ENCODE measurements at regions of chr2 and their contacts with region 1.

Region 1: DNA sequence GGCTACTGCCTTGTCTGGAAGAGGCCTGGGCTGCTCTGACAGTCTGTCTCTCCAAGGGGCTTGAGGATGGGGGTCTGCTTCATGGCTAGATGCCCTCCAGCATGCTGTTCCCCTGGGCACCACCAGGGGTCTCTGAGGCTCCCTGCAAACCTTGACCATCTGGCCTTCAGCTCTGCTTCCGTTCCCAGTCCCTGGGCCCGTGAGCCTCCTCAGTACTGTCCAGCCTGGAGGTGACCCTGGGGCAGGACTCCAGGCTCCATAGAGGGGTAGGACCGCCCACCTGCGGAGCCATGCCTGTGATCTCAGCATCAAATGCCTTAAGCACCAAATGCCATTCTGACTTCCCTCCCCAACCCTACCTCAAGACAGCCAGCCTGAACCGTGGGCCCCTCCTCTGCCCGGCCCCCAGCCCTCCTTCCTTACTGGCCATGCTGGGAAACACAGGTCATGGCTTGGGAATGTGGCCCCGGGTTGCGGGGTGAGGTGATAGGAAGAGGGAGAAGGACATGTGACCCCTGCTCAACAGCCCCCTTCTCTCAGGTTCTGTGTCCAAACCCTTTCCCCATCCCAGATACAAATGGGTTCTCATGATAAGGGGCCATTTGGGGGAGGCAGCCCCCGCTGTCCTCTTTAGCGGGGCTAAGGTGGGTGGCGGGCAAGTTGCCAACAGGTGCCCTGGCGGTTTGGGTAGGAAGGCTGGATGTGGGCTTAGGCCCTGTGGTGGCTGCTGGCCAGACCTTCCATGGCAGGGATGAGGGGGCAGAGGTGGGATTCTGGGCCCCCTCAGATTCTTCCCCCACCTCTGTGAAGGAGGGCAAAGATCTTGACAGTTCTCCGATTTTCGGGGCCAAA is 25.0 kb downstream of the SPEG start:
- DNase-seq: peak in 1 of 2 donors; percentile 73
- ATAC-seq: peak; percentile 67
- H3K4me3 ChIP-seq: no peak overlapping the region
- H3K27ac ChIP-seq: peak overlapping the region; percentile 77 to 91
- H3K4me1 ChIP-seq: peaks cover 0 to 3% of the 10 kb centered on the region in 2 donors
- H3K27me3 ChIP-seq: no peaks in the 10 kb centered on the region

Region 2: DNA sequence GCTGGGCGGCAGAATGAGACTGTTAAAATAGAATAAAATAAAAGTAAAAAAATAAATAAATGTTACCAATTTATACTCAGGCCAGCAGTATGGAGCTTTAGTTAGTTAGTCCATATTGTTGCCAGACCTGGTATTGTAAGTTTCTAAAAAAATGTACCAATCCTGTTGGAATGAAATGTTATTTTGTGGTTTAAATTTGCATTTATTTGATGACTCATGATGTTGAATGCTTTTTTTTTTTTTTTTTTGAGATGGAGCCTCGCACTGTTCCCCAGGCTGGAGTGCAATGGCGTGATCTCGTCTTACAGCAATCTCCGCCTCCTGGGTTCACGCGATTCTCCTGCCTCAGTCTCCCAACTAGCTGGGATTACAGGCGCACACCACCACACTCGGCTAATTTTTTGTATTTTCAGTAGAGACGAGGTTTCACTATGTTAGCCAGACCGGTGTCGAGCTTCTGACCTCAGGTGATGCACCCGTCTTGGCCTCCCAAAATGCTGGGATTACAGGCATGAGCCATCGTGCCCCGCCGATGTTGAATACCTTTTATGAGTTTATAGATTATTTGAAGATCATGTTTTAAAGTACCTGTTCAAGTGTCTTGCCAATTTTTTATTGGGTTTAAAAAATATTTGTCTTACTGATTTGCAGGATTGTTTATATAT is 144.8 kb before region 1 on chr2:
- intact Hi-C with region 1: no loop called
- DNase-seq: no peak
- ATAC-seq: no peak
- H3K4me3 ChIP-seq: no peak overlapping the region
- H3K27ac ChIP-seq: no peak overlapping the region
- H3K4me1 ChIP-seq: no peaks in the 10 kb centered on the region
- H3K27me3 ChIP-seq: no peaks in the 10 kb centered on the region

Region 3: DNA sequence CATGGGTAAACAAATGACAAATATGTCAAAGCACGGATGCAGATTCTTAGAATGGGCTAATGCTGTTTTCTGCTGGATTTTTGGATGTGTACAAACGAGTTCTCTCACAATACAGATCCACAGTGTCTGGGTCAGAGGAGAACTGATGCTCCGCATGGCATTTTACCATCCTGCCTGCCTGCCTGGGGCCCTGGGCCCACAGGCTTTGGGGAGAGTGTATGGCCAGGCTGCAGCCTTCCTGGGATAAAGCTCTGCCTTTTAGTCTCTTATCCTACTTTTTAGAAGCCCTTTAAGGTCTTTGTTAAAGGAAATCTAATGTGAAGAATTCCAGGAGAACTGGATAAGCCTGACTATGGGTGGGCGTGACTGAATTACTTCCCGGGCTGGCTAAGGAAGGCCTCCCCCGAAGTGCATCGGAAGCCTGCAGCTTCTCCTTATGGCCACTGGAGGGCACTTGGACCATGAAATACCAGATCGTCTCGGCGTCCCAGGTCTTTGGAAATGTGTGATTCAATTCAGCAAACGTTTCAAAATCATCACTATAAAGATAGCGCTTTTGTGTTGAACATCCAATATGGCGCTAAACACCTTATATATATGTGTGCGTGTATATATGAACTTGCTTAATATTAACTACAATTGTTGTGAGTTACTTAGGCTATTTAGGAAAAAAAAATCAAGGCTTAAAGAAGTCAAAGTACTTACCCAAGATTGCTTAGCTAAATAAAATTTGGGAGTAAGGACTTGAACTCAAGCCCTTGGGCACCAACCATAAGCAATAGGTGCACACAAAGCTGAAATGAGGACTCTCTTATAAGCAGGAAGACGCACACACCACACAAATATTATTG is 56.8 kb before region 1 on chr2:
- intact Hi-C with region 1: loop called (anchors 5 to 10 kb)
- DNase-seq: peak; percentile 78 to 79
- ATAC-seq: peak; percentile 76
- H3K4me3 ChIP-seq: no peak overlapping the region
- H3K27ac ChIP-seq: no peak overlapping the region
- H3K4me1 ChIP-seq: peaks cover 0 to 2% of the 10 kb centered on the region in 2 donors
- H3K27me3 ChIP-seq: no peaks in the 10 kb centered on the region

Region 4: DNA sequence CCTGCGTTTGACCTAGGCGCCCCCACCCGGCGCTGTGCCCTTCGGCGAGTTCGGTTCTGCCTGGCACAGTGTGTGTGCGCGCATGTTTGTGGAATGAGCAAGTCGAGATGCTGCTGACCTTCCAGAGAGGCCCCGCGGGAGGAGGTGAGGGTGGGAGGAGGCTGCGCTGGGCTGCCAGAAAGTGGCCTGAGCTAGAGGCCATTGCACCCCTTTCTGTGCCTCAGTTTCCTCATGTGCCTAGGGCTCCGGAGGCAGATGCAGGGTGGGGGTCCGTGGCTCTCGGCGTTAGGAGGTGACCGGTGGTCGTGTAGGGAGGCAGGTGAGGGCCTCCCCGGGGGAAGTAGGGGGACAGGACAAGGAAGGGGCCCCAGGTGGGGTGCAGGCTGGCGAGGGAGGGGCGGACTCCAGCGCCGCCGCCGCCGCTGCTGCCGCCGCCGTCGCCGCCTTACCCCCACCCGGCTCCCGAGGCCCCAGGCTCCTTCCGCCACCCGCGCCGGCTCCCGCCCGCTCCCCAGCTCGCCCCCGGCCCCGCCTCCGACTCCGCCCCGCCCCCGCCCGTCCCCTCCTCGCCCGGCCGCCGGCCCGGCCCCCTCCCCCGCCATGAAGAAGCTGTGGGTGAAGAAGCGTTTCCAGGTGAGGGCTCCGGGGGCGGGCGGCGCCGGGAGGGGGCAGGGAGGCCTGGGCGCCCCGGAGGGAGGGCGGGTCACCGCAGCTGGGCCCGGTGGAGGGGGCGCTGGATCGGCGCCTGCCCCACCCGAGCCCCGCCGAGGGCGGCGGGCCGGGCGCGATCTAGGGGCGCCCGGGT is 18.0 kb before region 1 on chr2:
- intact Hi-C with region 1: loop called in 1 of 2 experiments (anchors 2 kb)
- DNase-seq: peak; percentile 86 to 93
- ATAC-seq: peak; percentile 55
- H3K4me3 ChIP-seq: peak overlapping the region; percentile 79 to 93
- H3K27ac ChIP-seq: peak overlapping the region; percentile 90 to 94
- H3K4me1 ChIP-seq: peaks cover 0 to 4% of the 10 kb centered on the region in 2 donors
- H3K27me3 ChIP-seq: no peaks in the 10 kb centered on the region

Region 5: GRCh38 chr2:219498280-219499057 is 38.8 kb after region 1 on chr2 and contains the start of gene GMPPA:
- intact Hi-C with region 1: loop called (anchors 5 kb)
- DNase-seq: peak; percentile 98
- ATAC-seq: peak; percentile 92
- H3K4me3 ChIP-seq: peak within 1 kb of the TSS; percentile 69 to 74
- H3K27ac ChIP-seq: peak within 1 kb of the TSS; percentile 37 to 94
- H3K4me1 ChIP-seq: no peaks in the 10 kb centered on the region
- H3K27me3 ChIP-seq: no peaks in the 10 kb centered on the region
- total RNA-seq, gene GMPPA: 38.5 to 42.3 TPM

Region 6: GRCh38 chr2:219612577-219613286 is 153.0 kb after region 1 on chr2:
- intact Hi-C with region 1: no loop called
- DNase-seq: peak in 1 of 2 donors; percentile 34
- ATAC-seq: no peak
- H3K4me3 ChIP-seq: no peak overlapping the region
- H3K27ac ChIP-seq: no peak overlapping the region
- H3K4me1 ChIP-seq: no peaks in the 10 kb centered on the region
- H3K27me3 ChIP-seq: no peaks in the 10 kb centered on the region

Measured in aorta (tissue), 5 donors.